ENCODE measurements at regions of chr18 and their contacts with region 1.

Region 1: GRCh38 chr18:54247511-54248175 is 21.7 kb upstream of the POLI start:
- DNase-seq: peak; percentile 13
- H3K4me3 ChIP-seq: peak overlapping the region; percentile 26
- H3K27ac ChIP-seq: peak overlapping the region; percentile 83
- H3K4me1 ChIP-seq: peaks cover 46% of the 10 kb centered on the region
- CTCF ChIP-seq: no peak

Region 2: DNA sequence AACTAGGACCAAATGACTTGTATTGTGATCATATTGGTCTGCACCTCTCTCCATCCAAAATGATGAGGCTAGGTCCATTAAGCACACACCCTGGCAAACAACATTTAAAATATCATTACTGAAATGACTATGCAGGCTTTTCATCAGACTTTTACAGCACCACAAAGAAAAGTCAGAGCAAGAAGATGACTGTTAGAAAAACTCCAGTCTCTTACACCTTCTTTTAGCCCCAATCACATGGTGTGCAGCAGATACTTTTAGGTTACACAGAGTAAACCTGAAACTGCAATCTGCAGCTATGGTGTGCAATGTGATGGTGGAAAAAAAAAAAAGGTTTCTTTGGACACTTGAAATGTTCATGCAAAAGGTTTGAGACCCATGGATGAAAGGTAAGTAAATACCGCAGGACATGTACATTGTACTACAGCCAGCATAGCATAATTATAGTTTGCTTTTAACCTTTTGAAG is 16.3 kb after region 1 on chr18:
- CTCF ChIA-PET with region 1: interaction called, 3 read pairs
- POLR2A ChIA-PET with region 1: interaction called, 16 read pairs
- intact Hi-C with region 1: loop called (anchors 1 kb)
- DNase-seq: peak; percentile 30
- H3K4me3 ChIP-seq: peak overlapping the region; percentile 30
- H3K27ac ChIP-seq: peak overlapping the region; percentile 55
- H3K4me1 ChIP-seq: peaks cover 63% of the 10 kb centered on the region
- CTCF ChIP-seq: no peak

Region 3: GRCh38 chr18:54269893-54270844 is 22.5 kb after region 1 on chr18:
- CTCF ChIA-PET with region 1: interaction called, 5 read pairs
- POLR2A ChIA-PET with region 1: interaction called, 16 read pairs
- intact Hi-C with region 1: loop called (anchors 1 kb)
- DNase-seq: peak; percentile 56
- H3K4me3 ChIP-seq: peak overlapping the region; percentile 75
- H3K27ac ChIP-seq: peak overlapping the region; percentile 91
- H3K4me1 ChIP-seq: peaks cover 44% of the 10 kb centered on the region
- CTCF ChIP-seq: peak; percentile 74

Measured in OCI-LY7 (cell line).